Activated B cell treated with CpG ODN at 0.5 μM for 24 hours (primary cell): ENCODE measurements at regions of chr2 and their contacts with region 1.

Region 1: DNA sequence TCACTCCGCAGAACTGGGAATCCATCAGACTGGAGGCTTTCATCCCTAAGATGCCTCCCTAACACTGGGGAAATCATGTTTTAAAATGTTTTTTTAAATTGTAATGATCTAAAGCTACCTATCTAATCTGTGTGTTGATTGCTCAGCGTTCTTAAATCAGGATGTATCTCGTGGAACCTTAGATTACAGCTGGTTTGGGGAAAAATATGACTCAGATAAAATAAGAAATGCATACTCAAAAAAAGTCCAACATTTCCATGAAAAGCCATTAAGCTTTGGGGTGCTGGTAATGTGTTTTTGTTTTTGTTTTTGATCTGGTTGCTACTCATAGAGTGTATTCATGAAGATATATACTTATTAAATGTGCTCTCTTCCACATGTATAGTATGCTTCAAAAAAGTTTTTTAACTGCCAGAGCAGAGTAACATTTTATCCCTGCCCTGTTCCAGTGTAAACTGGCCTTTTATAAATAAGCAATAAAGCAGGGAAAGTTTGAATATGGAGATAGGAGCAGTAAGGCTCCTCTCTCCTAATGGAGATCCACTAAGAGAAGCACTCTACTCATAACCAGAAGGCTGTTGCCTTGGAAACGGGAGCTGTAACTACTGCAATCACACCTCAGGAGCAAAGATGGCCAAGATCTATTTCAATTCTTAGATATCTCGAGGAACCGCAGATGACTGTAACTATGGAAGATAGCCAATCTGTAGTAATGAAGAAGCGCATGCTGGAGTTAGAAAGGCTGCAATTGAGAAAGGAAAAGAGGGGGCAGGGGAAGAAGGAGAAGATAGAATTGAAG is 41.6 kb downstream of the ANKRD44 start:
- DNase-seq: no peak
- ATAC-seq: peak; percentile 33
- H3K4me3 Mint-ChIP-seq: peak overlapping the region; percentile 39
- H3K27ac Mint-ChIP-seq: peak overlapping the region; percentile 80
- H3K4me1 Mint-ChIP-seq: peaks cover 95% of the 10 kb centered on the region
- H3K27me3 Mint-ChIP-seq: no peaks in the 10 kb centered on the region
- CTCF ChIP-seq: no peak

Region 2: GRCh38 chr2:197072533-197072932 is 196.5 kb before region 1 on chr2:
- CTCF ChIA-PET with region 1: no interaction called
- POLR2A ChIA-PET with region 1: no interaction called
- intact Hi-C with region 1: no loop called
- DNase-seq: no peak
- ATAC-seq: no peak
- H3K4me3 Mint-ChIP-seq: no peak overlapping the region
- H3K27ac Mint-ChIP-seq: no peak overlapping the region
- H3K4me1 Mint-ChIP-seq: peaks cover 1% of the 10 kb centered on the region
- H3K27me3 Mint-ChIP-seq: no peaks in the 10 kb centered on the region
- CTCF ChIP-seq: no peak

Region 3: DNA sequence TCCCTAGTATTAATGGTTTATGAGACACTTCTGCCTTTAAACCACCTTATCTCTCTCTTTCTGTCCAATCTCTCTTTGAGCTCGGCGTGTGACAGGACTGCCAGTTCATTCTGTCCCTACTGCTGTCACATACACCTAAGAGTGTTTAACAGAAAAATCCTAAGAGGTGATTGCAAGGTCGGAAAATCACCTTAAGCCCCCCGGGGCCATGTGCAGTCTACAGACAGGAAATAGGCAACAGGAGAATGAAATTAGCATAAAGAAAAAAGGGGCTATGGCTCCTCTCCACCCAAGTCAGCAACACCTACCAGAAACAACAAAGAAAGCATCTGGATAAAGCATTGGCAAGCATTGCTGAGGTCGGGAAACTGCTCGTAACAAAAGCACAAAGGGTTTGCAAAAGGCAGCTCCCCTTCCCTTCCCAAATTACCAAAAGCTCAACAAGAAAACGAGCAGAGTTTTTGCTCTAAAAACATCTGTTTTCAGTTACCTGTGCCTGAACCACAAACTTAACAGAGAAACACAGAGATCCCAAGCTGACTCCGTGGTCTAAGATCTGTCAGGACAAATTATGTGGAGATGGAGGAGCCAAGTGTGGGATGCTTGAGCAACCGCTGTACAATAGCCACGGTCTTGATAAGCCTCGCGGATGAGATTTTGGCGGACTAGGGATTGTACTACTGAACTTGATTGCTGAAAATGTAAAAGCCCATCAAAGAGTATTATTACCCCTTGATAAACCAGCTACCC is 11.2 kb after region 1 on chr2:
- CTCF ChIA-PET with region 1: no interaction called
- POLR2A ChIA-PET with region 1: interaction called, 5 read pairs
- intact Hi-C with region 1: loop called (anchors 1 kb)
- DNase-seq: no peak
- ATAC-seq: peak; percentile 64
- H3K4me3 Mint-ChIP-seq: peak overlapping the region; percentile 60
- H3K27ac Mint-ChIP-seq: peak overlapping the region; percentile 80
- H3K4me1 Mint-ChIP-seq: peaks cover 86% of the 10 kb centered on the region
- H3K27me3 Mint-ChIP-seq: no peaks in the 10 kb centered on the region
- CTCF ChIP-seq: no peak

Region 4: GRCh38 chr2:197286805-197287598 is 18.0 kb after region 1 on chr2:
- CTCF ChIA-PET with region 1: no interaction called
- POLR2A ChIA-PET with region 1: interaction called, 3 read pairs
- intact Hi-C with region 1: loop called (anchors 2 kb)
- DNase-seq: no peak
- ATAC-seq: peak; percentile 91
- H3K4me3 Mint-ChIP-seq: peak overlapping the region; percentile 44
- H3K27ac Mint-ChIP-seq: peak overlapping the region; percentile 85
- H3K4me1 Mint-ChIP-seq: peaks cover 83% of the 10 kb centered on the region
- H3K27me3 Mint-ChIP-seq: no peaks in the 10 kb centered on the region
- CTCF ChIP-seq: no peak

Region 5: GRCh38 chr2:197786010-197786877 is 517.3 kb after region 1 on chr2:
- CTCF ChIA-PET with region 1: no interaction called
- POLR2A ChIA-PET with region 1: no interaction called
- intact Hi-C with region 1: no loop called
- DNase-seq: peak; percentile 40
- ATAC-seq: peak; percentile 72
- H3K4me3 Mint-ChIP-seq: peak overlapping the region; percentile 71
- H3K27ac Mint-ChIP-seq: no peak overlapping the region
- H3K4me1 Mint-ChIP-seq: no peaks in the 10 kb centered on the region
- H3K27me3 Mint-ChIP-seq: peaks cover 37% of the 10 kb centered on the region
- CTCF ChIP-seq: no peak